Activated naive CD4-positive, alpha-beta T cell treated with anti-CD3 and anti-CD28 coated beads for 36 hours (primary cell): ENCODE measurements at regions of chr12 and their contacts with region 1.

Region 1: DNA sequence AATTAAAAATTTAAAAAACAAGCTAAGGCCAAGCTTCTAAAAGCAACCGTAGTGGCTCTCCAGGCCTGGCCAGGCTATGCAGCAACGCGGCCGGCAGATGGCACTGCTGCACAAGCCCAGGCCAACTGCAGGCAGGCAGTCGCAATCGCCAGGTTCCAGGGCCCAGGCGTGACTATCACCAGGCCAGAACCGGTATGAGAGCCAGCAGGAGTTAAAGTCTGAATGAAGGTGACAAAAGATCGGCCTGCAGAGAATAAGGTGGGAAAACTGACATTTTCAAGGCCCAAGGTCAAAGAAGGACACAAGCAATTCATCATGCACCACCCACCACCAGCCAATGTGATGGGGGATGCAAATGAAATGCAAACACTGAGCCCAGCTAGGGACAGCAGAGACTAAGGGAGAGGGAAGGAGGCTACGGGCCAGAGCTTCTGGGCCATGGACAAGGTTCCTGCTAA is 43.6 kb upstream of the ANO2 start:
- DNase-seq: peak; percentile 79
- H3K4me3 Mint-ChIP-seq: no peak overlapping the region
- H3K27ac Mint-ChIP-seq: no peak overlapping the region
- H3K4me1 Mint-ChIP-seq: no peaks in the 10 kb centered on the region
- H3K27me3 Mint-ChIP-seq: no peaks in the 10 kb centered on the region

Region 2: DNA sequence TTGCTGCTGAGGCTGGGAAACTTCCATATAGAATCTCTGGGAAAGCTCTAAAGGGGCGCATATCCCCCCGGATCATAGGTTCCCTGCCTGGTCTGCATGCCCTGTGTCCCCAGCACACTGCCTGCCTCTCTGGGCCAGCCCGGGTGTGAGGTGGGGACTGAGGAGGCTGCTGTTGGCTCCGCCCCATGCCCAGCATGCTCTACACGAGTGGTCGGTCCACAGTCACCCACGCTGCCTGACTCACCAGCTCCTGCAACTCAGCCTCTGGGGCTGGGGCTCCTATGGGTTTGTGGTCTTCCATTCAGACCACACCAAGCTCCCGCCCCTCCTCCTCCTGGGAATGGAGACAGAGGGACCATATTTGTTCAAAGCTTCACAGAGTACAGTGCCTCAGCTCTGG is 44.9 kb after region 1 on chr12:
- CTCF ChIA-PET with region 1: interaction called, 197 read pairs
- intact Hi-C with region 1: no loop called
- DNase-seq: no peak
- H3K4me3 Mint-ChIP-seq: no peak overlapping the region
- H3K27ac Mint-ChIP-seq: no peak overlapping the region
- H3K4me1 Mint-ChIP-seq: no peaks in the 10 kb centered on the region
- H3K27me3 Mint-ChIP-seq: no peaks in the 10 kb centered on the region

Region 3: GRCh38 chr12:6039894-6040568 is 51.3 kb after region 1 on chr12:
- CTCF ChIA-PET with region 1: interaction called, 197 read pairs
- intact Hi-C with region 1: loop called (anchors 1 kb)
- DNase-seq: peak; percentile 69
- H3K4me3 Mint-ChIP-seq: no peak overlapping the region
- H3K27ac Mint-ChIP-seq: no peak overlapping the region
- H3K4me1 Mint-ChIP-seq: peaks cover 2% of the 10 kb centered on the region
- H3K27me3 Mint-ChIP-seq: no peaks in the 10 kb centered on the region

Region 4: GRCh38 chr12:6047249-6048237 is 58.9 kb after region 1 on chr12:
- CTCF ChIA-PET with region 1: interaction called, 197 read pairs
- intact Hi-C with region 1: no loop called
- DNase-seq: no peak
- H3K4me3 Mint-ChIP-seq: no peak overlapping the region
- H3K27ac Mint-ChIP-seq: no peak overlapping the region
- H3K4me1 Mint-ChIP-seq: peaks cover 3% of the 10 kb centered on the region
- H3K27me3 Mint-ChIP-seq: no peaks in the 10 kb centered on the region

Region 5: GRCh38 chr12:6056406-6057240 is 67.9 kb after region 1 on chr12:
- CTCF ChIA-PET with region 1: interaction called, 15 read pairs
- intact Hi-C with region 1: no loop called
- DNase-seq: peak; percentile 26
- H3K4me3 Mint-ChIP-seq: no peak overlapping the region
- H3K27ac Mint-ChIP-seq: no peak overlapping the region
- H3K4me1 Mint-ChIP-seq: no peaks in the 10 kb centered on the region
- H3K27me3 Mint-ChIP-seq: peaks cover 7% of the 10 kb centered on the region

Region 6: DNA sequence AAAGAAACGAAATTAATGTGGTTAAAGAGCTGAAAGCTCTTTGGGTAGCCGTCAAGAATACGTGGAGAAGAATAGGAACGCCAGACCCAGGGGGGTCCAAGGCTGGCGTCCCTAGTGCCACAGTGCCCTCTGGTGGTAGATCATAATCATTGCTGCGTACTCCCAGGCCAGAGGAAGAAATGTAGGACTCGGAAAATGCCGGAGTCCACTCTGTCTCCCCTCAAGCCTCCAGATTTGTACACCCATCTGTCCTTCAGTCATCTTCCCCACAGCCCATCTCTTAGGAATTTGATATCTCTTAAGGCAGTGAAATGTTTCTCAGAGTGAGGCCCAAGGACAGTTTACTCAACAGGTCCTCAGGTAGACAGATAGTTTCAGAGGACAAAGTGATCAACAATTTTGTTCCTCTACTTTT is 296.4 kb after region 1 on chr12:
- CTCF ChIA-PET with region 1: interaction called, 31 read pairs
- intact Hi-C with region 1: loop called (anchors 1 kb)
- DNase-seq: peak; percentile 70
- H3K4me3 Mint-ChIP-seq: no peak overlapping the region
- H3K27ac Mint-ChIP-seq: no peak overlapping the region
- H3K4me1 Mint-ChIP-seq: no peaks in the 10 kb centered on the region
- H3K27me3 Mint-ChIP-seq: peaks cover 3% of the 10 kb centered on the region